CD4-positive, alpha-beta memory T cell (primary cell): ENCODE measurements at regions of chr2 and their contacts with region 1.

Region 1: GRCh38 chr2:42169100-42169873 is at the start of gene EML4:
- DNase-seq: peak; percentile 82 to 94 (median 89)
- H3K4me3 ChIP-seq: peak within 1 kb of the TSS; percentile 71 to 81
- H3K4me3 Mint-ChIP-seq: peak within 1 kb of the TSS in 5 of 8 donors; percentile 48 to 71 (median 65)
- H3K27ac ChIP-seq: peak within 1 kb of the TSS; percentile 95
- H3K27ac Mint-ChIP-seq: peak within 1 kb of the TSS in 3 of 7 donors; percentile 84 to 95 (median 94)
- H3K4me1 ChIP-seq: peaks cover 29% of the 10 kb centered on the region
- H3K4me1 Mint-ChIP-seq: peaks cover 0 to 28% (median 14%) of the 10 kb centered on the region in 4 donors
- H3K27me3 ChIP-seq: no peaks in the 10 kb centered on the region
- H3K27me3 Mint-ChIP-seq: no peaks in the 10 kb centered on the region
- total RNA-seq, gene EML4: 168 to 172 TPM

Region 2: DNA sequence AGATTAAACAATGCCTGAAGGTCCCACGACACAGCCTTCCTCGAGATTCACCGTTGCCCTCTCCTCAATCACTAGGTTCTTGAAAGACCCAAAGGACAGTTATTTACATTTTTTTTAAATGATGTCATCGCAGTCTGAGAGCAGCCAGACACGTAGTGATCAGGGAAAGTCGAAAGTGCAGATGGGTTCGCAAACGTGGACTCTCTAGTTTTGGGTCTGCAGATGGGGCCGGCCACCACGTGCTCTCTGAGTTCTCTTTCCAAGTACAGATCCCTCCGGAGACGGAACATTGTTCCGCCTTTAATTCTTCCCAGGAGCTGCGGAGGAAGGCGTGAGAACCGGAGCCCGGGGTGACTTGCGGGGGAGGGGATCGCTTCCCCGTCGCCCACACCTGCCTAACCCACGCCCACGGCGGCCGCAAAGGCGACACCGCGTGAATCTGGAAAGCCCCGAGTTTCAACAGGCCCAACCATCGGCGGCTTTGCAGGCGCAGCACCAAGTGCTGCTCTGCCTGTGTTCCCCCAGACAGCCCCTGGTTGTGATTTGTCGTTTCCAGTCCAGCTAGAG is 67.2 kb before region 1 on chr2:
- CTCF ChIA-PET with region 1: interaction called, 60 read pairs
- POLR2A ChIA-PET with region 1: interaction called, 67 read pairs
- intact Hi-C with region 1: loop called (anchors 1 kb)
- DNase-seq: peak; percentile 96 to 98 (median 96)
- H3K4me3 ChIP-seq: peak overlapping the region; percentile 53 to 64
- H3K4me3 Mint-ChIP-seq: peak overlapping the region in 7 of 8 donors; percentile 85 to 90 (median 87)
- H3K27ac ChIP-seq: peak overlapping the region; percentile 100
- H3K27ac Mint-ChIP-seq: no peak overlapping the region
- H3K4me1 ChIP-seq: peaks cover 94% of the 10 kb centered on the region
- H3K4me1 Mint-ChIP-seq: peaks cover 38 to 64% (median 51%) of the 10 kb centered on the region in 4 donors
- H3K27me3 ChIP-seq: no peaks in the 10 kb centered on the region
- H3K27me3 Mint-ChIP-seq: no peaks in the 10 kb centered on the region

Region 3: DNA sequence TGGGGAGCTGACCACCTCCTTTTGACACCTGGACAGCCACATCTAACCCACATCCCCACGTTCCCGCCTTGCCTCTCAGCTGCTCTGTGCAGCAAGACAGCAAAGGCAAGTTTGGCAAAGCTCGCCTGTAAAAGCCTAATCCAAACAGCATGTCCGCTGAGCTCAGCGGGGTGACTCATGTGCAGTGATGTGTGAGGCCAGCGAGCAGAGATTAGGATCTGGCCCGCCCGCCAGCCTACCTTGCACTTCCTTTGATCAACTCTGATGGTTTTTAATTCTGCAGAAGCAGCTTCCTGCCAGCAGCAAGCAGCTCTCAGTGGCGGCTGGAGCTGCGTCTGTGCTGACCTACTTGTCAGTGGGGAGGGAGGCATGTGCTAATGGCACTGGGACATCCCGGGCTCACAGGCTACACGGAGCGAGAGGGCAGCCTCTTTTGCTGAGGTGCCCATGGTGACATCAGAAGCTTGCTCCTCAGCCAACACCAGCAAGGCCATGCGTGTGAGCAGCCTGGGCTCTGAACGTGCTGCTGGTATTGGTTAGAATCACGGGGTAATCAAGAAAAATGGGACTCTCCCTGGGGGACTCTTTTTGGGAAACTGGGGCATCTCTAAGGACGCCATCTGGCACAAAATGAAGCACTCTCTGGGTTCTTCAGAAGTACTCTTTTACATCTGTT is 36.2 kb before region 1 on chr2:
- CTCF ChIA-PET with region 1: interaction called, 19 read pairs
- POLR2A ChIA-PET with region 1: interaction called, 114 read pairs
- intact Hi-C with region 1: loop called (anchors 2 kb)
- DNase-seq: peak; percentile 92 to 99 (median 96)
- H3K4me3 ChIP-seq: peak overlapping the region; percentile 16 to 21
- H3K4me3 Mint-ChIP-seq: peak overlapping the region; percentile 58 to 88 (median 76)
- H3K27ac ChIP-seq: peak overlapping the region; percentile 93
- H3K27ac Mint-ChIP-seq: peak overlapping the region; percentile 88 to 100 (median 99)
- H3K4me1 ChIP-seq: peaks cover 99% of the 10 kb centered on the region
- H3K4me1 Mint-ChIP-seq: peaks cover 68 to 100% (median 88%) of the 10 kb centered on the region in 4 donors
- H3K27me3 ChIP-seq: no peaks in the 10 kb centered on the region
- H3K27me3 Mint-ChIP-seq: no peaks in the 10 kb centered on the region

Region 4: DNA sequence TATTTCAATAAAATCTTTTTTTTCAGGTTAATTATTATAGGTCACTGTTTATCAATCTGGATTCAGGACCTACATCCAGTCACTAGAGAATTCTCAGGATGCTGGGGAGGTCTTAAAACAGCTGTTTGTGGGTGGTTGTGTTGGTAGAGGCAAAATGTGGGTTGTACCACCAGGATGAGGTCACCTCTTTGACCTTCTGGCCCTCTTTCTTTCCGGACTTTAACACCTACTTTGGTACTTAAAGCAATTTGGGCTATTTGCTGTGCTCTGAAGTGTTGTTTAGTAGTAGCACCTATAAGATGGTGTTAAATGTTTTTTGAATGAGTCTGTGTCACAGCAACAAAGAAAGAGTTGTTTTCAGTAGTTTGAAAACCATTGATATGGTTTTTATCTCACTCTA is 14.5 kb after region 1 on chr2:
- CTCF ChIA-PET with region 1: interaction called, 5 read pairs
- POLR2A ChIA-PET with region 1: interaction called, 45 read pairs
- intact Hi-C with region 1: no loop called
- DNase-seq: no peak
- H3K4me3 ChIP-seq: no peak overlapping the region
- H3K4me3 Mint-ChIP-seq: peak overlapping the region in 3 of 8 donors; percentile 19 to 47 (median 40)
- H3K27ac ChIP-seq: no peak overlapping the region
- H3K27ac Mint-ChIP-seq: peak overlapping the region in 2 of 7 donors; percentile 27 to 38
- H3K4me1 ChIP-seq: peaks cover 88% of the 10 kb centered on the region
- H3K4me1 Mint-ChIP-seq: peaks cover 63 to 90% (median 76%) of the 10 kb centered on the region in 4 donors
- H3K27me3 ChIP-seq: no peaks in the 10 kb centered on the region
- H3K27me3 Mint-ChIP-seq: no peaks in the 10 kb centered on the region

Region 5: GRCh38 chr2:42196403-42197267 is 27.3 kb after region 1 on chr2:
- CTCF ChIA-PET with region 1: interaction called, 8 read pairs
- POLR2A ChIA-PET with region 1: interaction called, 5 read pairs
- intact Hi-C with region 1: loop called (anchors 1 kb)
- DNase-seq: peak; percentile 56 to 66 (median 63)
- H3K4me3 ChIP-seq: no peak overlapping the region
- H3K4me3 Mint-ChIP-seq: peak overlapping the region in 7 of 8 donors; percentile 7 to 67 (median 51)
- H3K27ac ChIP-seq: no peak overlapping the region
- H3K27ac Mint-ChIP-seq: peak overlapping the region; percentile 40 to 87 (median 74)
- H3K4me1 ChIP-seq: peaks cover 97% of the 10 kb centered on the region
- H3K4me1 Mint-ChIP-seq: peaks cover 59 to 94% (median 74%) of the 10 kb centered on the region in 4 donors
- H3K27me3 ChIP-seq: no peaks in the 10 kb centered on the region
- H3K27me3 Mint-ChIP-seq: no peaks in the 10 kb centered on the region